ENCODE measurements at regions of chr17 and their contacts with region 1.

Region 1: DNA sequence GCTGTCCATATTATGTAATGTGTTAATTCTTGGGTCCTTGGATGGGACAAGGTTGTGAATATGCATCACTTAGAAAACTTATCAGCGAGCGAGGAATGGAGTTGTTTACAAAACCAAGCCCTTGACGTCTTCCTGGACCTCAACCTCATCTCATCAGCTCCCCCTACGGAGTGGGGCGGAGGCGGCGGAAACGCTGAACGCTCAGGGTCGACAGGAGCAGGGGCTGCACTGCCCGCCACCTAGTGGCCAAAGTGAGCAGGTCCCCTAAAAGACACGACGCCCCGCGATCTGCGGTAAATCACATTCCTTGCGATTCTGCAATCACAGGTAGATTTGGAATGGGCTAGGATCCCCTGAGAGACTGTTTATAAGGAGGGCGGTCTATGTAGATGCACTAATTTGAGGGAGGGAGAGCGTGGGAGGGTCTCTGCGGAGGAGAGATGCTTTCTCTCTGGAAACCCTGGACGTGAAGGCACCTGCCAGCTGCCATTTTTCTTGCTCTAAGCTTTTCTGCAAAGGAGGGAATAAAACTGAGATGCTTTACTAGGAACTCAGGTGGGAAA is 5.4 kb upstream of the ICAM2 start:
- DNase-seq: peak; percentile 86 to 95 (median 87)
- ATAC-seq: peak; percentile 89
- H3K4me3 ChIP-seq: 0 out of 2 replicates have a peak overlapping the region, but pooled peaks have one; percentile 12
- H3K27ac ChIP-seq: peak overlapping the region; percentile 93
- H3K4me1 ChIP-seq: peaks cover 31 to 35% of the 10 kb centered on the region in 2 experiments; a peak in 4 of 5 replicates
- H3K27me3 ChIP-seq: no peaks in the 10 kb centered on the region
- CTCF ChIP-seq: peak; percentile 99 to 100 (median 99)
- EP300 ChIP-seq: peak; percentile 41; the same call in 1 of the 2 replicates
- POLR2A ChIP-seq: no peak
- RAD21 ChIP-seq: peak; percentile 83 to 90

Region 2: DNA sequence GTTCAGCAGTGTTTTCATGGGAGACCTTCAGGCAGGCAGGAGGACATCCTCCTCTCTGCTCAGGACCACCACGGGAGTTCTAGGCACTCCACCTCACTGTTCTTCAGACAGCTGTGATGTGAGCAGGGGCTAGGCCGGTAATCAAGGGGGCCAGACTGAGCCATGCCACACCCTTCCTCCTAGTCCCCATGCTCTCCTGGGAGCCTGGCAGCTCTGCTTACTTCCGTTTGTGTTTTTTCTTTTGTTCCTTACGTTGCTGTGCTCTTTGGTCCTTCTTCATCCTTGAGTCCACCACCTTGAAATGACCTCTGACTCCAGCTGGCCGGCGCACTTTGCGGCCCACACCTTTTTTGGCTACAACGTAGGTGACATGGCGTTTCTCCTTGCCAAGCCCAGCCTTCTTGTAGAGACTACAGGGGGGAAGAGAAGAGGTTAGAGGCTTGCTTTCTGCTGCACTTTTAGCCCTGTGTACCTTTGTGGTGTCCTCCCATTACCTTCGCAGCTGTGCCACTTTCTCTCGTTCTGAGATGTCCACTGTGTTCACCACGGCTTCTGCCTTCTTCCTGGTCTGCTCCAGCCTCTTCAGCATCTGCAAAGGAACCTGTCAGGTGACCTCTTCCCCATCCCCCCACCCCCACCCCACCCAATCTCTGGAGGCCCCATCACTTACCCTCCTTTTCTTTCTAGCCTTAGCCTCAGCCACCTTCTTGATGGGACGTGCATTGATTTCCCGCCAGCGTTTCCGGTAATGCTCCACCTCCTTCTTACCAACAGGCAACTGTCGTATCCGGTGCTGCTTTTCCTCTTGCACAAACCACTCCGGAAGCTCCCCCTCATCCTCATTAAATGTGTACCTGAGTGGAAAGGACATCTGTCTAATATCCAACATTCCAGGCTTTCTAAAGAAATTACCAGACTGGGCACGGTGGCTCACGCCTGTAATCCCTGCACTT is 206.0 kb before region 1 on chr17:
- CTCF ChIA-PET with region 1: no interaction called
- POLR2A ChIA-PET with region 1: no interaction called
- in situ Hi-C with region 1: no loop called
- intact Hi-C with region 1: no loop called
- DNase-seq: peak in 2 of 4 experiments; percentile 37 to 39
- ATAC-seq: peak; percentile 18; the same call in 1 of the 3 replicates
- H3K4me3 ChIP-seq: no peak overlapping the region
- H3K27ac ChIP-seq: no peak overlapping the region
- H3K4me1 ChIP-seq: no peaks in the 10 kb centered on the region; a peak in 2 of 5 replicates
- H3K27me3 ChIP-seq: no peaks in the 10 kb centered on the region
- CTCF ChIP-seq: no peak
- EP300 ChIP-seq: no peak
- POLR2A ChIP-seq: peak; percentile 68
- RAD21 ChIP-seq: no peak

Region 3: DNA sequence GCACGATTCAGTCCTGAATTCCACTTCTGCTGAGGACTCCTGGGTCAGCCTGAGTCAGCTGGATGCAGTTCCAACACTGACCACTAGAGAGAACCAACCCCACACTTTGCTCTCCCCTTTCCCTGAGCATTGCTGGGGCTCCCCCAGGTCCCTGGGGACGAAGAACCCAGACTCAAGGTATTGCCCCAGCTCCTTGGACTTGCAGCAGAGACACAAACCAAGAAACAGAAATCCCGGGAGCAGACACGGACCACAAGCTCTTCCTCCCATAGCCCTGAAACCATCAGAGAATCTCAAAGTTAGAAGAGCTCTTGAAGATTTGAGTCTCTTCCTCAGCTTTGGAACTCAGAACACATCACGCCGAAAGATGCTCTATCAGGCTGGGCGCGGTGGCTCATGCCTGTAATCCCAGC is 106.5 kb before region 1 on chr17:
- CTCF ChIA-PET with region 1: interaction called, 10 read pairs
- POLR2A ChIA-PET with region 1: interaction called, 4 read pairs
- in situ Hi-C with region 1: loop called (anchors 10 kb)
- intact Hi-C with region 1: loop called (anchors 2 kb)
- DNase-seq: peak; percentile 75 to 81 (median 78)
- ATAC-seq: peak; percentile 96
- H3K4me3 ChIP-seq: no peak overlapping the region
- H3K27ac ChIP-seq: no peak overlapping the region
- H3K4me1 ChIP-seq: no peaks in the 10 kb centered on the region; a peak in 1 of 5 replicates
- H3K27me3 ChIP-seq: peaks cover 3 to 29% of the 10 kb centered on the region in 2 experiments; a peak in 4 of 5 replicates
- CTCF ChIP-seq: peak; percentile 88 to 92 (median 91)
- EP300 ChIP-seq: no peak
- POLR2A ChIP-seq: no peak
- RAD21 ChIP-seq: peak; percentile 87 to 94

Region 4: DNA sequence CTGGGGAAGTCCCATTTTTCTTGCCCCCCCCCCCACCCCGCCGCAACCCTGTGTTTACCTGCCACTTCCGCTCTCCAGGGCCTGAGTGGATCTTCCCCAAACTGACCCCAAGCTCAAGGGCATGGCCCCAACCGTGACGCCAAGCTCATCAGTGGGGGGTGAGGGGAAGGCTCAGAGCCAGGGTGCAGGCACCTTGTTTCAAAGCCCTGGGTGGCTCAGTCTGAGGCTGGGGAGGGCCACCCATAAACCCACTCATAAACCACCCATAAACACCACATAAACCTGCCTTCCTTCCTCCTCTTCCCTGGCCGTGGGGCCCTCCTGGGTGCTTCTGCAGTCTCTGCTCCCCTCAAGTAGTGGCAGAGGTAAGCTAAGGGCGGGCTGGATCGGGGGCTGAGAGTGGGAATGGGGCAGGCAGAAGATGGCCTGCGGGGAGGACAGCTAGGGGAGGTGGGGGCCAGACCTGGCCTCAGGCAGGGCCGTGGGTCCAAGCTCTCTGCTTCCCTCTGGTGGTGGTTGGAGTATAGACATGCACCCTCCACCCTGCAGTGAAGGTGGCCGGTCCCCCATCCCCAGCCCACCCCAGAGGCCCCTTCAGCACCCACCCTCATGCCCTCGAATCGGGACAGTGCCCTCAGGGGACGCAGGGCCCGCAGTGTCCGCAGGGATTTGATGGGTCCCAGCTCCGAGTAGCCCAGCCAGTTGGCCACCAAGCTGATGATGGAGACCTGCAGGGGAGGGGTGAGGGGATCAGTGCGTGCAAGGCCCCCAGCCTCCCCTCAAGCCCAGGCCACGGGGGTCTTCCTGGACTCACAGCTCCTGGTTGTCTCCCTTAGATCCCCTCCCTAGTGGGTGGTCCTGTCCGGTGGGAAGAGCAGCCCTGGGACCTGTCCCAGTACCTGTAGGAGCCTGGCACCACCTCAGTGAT is 79.1 kb before region 1 on chr17:
- CTCF ChIA-PET with region 1: interaction called, 3 read pairs
- POLR2A ChIA-PET with region 1: no interaction called
- in situ Hi-C with region 1: no loop called
- intact Hi-C with region 1: loop called (anchors 10 kb)
- DNase-seq: peak; percentile 77 to 91 (median 90)
- ATAC-seq: peak; percentile 92
- H3K4me3 ChIP-seq: no peak overlapping the region
- H3K27ac ChIP-seq: no peak overlapping the region
- H3K4me1 ChIP-seq: peaks cover 3 to 30% of the 10 kb centered on the region in 2 experiments; a peak in 3 of 5 replicates
- H3K27me3 ChIP-seq: peaks cover 21 to 69% of the 10 kb centered on the region in 2 experiments; a peak in 4 of 5 replicates
- CTCF ChIP-seq: peak; percentile 61 to 82 (median 72)
- EP300 ChIP-seq: no peak
- POLR2A ChIP-seq: no peak
- RAD21 ChIP-seq: peak; percentile 34 to 63; a peak in 3 of 4 replicates

Region 5: DNA sequence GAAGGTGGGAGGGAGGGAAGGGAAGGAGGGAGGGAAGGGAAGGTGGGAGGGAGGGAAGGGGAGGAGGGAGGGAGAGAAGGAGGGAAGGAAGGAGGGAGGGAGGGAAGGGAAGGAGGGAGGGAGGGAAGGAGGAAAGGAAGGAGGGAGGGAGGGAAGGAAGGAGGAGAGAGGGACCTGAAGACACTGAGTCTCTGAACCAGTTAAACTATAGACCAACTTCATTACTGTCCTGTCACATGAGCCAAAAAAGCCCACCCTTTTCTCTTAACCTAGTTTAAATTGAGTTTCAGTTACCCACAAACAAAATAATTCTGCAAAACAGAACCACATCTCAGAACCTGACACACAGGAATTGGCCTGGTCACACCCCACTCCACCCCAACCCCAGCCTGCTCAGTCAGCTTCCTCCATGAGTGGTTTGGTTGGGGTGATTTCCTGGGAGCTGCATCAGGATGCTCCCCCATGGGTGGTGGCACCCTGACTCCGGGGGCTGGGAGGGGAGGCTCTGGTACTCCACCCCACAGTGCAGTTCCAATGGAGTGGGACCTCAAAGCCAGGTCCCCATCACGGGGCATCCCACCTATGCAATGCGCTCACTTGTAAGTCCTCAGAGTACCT is 32.3 kb before region 1 on chr17:
- CTCF ChIA-PET with region 1: interaction called, 3 read pairs
- POLR2A ChIA-PET with region 1: interaction called, 4 read pairs
- in situ Hi-C with region 1: no loop called
- intact Hi-C with region 1: loop called (anchors 5 kb)
- DNase-seq: no peak
- ATAC-seq: no peak
- H3K4me3 ChIP-seq: no peak overlapping the region
- H3K27ac ChIP-seq: no peak overlapping the region
- H3K4me1 ChIP-seq: peaks cover 5 to 30% of the 10 kb centered on the region in 2 experiments
- H3K27me3 ChIP-seq: peaks cover 12 to 28% of the 10 kb centered on the region in 2 experiments; a peak in 4 of 5 replicates
- CTCF ChIP-seq: no peak
- EP300 ChIP-seq: no peak
- POLR2A ChIP-seq: no peak
- RAD21 ChIP-seq: no peak

Region 6: DNA sequence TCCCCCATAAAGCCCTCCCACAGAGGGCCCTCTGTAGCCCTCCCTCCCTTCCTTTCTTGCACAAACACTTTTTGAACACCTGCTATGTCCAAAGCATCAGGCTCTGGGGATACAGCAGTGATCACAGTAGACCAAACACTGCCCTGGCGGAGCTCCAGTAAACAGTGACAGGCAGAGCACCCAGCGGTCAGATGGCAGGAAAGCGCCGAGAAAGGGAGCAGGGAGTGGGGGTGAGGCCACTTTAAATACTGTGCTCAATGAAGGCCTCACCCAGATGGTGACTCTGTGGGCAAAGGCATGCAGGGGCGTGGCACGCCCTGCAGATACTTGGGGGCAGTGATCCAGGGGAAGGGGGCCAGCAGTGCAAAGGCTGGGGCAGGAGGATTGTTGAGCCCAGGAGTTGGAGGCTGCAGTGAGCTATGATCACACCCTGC is 20.1 kb before region 1 on chr17:
- CTCF ChIA-PET with region 1: no interaction called
- POLR2A ChIA-PET with region 1: interaction called, 24 read pairs
- in situ Hi-C with region 1: no loop called
- intact Hi-C with region 1: no loop called
- DNase-seq: peak; percentile 49 to 64 (median 59)
- ATAC-seq: peak; percentile 56
- H3K4me3 ChIP-seq: peak overlapping the region; percentile 44
- H3K27ac ChIP-seq: peak overlapping the region; percentile 81
- H3K4me1 ChIP-seq: peaks cover 19 to 63% of the 10 kb centered on the region in 2 experiments
- H3K27me3 ChIP-seq: no peaks in the 10 kb centered on the region
- CTCF ChIP-seq: peak in 1 of 3 experiments; percentile 2; a peak in 1 of 6 replicates
- EP300 ChIP-seq: no peak
- POLR2A ChIP-seq: no peak
- RAD21 ChIP-seq: no peak

Region 7: DNA sequence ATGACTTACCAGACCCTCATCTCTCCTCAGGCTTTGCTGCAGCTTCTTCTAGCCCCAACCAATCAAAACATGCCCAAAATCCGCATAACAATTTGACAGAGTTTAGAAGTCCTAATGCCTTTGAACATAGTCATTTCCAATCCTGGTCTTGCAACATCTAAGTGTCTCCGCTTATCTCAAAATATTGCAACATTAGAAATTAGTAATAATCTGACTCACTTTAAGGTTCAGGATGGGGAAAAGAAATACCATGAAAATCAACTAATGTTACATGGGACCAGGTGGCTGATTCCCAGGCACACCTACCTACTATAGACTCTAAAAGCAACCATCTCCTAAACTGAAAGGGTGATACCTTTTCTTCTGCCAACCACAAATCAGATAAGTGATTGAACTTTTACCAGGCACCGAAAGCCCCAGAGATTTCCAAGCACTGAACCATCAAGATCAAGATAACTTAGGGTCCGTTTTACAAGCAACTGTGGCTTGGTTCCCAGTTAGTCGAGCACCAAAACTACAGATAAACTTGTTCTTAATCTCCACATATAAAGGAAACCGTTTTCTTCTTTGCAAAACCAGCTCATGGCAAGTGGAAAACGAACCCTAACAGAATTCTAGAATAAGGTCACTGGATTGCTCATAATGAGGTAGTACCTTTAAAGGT is 90.2 kb after region 1 on chr17:
- CTCF ChIA-PET with region 1: no interaction called
- POLR2A ChIA-PET with region 1: no interaction called
- in situ Hi-C with region 1: no loop called
- intact Hi-C with region 1: no loop called
- DNase-seq: no peak
- ATAC-seq: no peak
- H3K4me3 ChIP-seq: no peak overlapping the region
- H3K27ac ChIP-seq: no peak overlapping the region
- H3K4me1 ChIP-seq: peaks cover 6 to 13% of the 10 kb centered on the region in 2 experiments
- H3K27me3 ChIP-seq: no peaks in the 10 kb centered on the region
- CTCF ChIP-seq: no peak
- EP300 ChIP-seq: no peak
- POLR2A ChIP-seq: no peak
- RAD21 ChIP-seq: no peak

Region 8: GRCh38 chr17:64281962-64282727 is 256.3 kb after region 1 on chr17:
- CTCF ChIA-PET with region 1: interaction called, 6 read pairs
- POLR2A ChIA-PET with region 1: interaction called, 3 read pairs
- in situ Hi-C with region 1: loop called (anchors 10 kb)
- intact Hi-C with region 1: loop called (anchors 5 kb)
- DNase-seq: peak; percentile 73 to 81 (median 80)
- ATAC-seq: peak; percentile 80
- H3K4me3 ChIP-seq: no peak overlapping the region
- H3K27ac ChIP-seq: no peak overlapping the region
- H3K4me1 ChIP-seq: peaks cover 0 to 3% of the 10 kb centered on the region in 2 experiments; a peak in 1 of 5 replicates
- H3K27me3 ChIP-seq: no peaks in the 10 kb centered on the region
- CTCF ChIP-seq: peak; percentile 79 to 92 (median 88)
- EP300 ChIP-seq: no peak
- POLR2A ChIP-seq: no peak
- RAD21 ChIP-seq: peak; percentile 84

Region 9: GRCh38 chr17:64615028-64615677 is 589.3 kb after region 1 on chr17:
- CTCF ChIA-PET with region 1: no interaction called
- POLR2A ChIA-PET with region 1: no interaction called
- in situ Hi-C with region 1: no loop called
- intact Hi-C with region 1: no loop called
- DNase-seq: no peak
- ATAC-seq: no peak
- H3K4me3 ChIP-seq: no peak overlapping the region
- H3K27ac ChIP-seq: no peak overlapping the region
- H3K4me1 ChIP-seq: peaks cover 13 to 23% of the 10 kb centered on the region in 2 experiments
- H3K27me3 ChIP-seq: no peaks in the 10 kb centered on the region
- CTCF ChIP-seq: no peak
- EP300 ChIP-seq: no peak
- POLR2A ChIP-seq: no peak
- RAD21 ChIP-seq: no peak